ENCODE measurements at regions of chr2 and their contacts with region 1.

Region 1: GRCh38 chr2:185338104-185338503 is 400.5 kb upstream of the FSIP2 start:
- DNase-seq: no peak
- H3K4me3 ChIP-seq: no peak overlapping the region
- H3K27ac ChIP-seq: no peak overlapping the region
- H3K4me1 ChIP-seq: no peaks in the 10 kb centered on the region
- H3K27me3 ChIP-seq: no peaks in the 10 kb centered on the region
- CTCF ChIP-seq: no peak
- EP300 ChIP-seq: no peak
- POLR2A ChIP-seq: no peak
- RAD21 ChIP-seq: no peak

Region 2: DNA sequence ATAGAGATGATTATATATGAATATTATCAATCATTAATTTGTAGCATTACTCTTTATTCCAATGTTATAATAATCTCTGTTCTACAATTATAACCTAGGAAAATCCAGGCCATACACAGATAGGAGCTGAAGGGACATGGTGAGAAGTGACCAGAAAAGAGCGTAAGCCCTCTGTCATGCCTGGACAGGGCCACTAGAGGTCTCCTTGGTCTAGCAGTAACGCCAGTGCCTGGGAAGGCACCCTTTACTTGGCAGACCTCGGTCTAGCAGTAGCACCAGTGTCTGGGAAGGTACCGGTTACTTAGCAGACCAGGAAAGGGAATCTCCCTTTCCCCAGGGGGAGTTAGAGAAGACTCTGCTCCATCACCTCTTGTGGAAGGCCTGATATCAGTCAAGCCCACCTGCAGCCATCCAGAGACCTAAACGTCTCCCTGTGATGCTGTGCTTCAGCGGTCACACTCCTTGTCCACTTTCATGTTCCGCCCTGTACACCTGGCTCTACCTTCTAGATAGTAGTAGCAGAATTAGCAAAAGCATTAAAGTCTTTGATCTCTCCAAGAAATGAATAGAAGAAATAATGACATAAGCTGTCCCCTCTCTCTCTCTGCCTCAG is 47.0 kb before region 1 on chr2:
- CTCF ChIA-PET with region 1: interaction called, 16 read pairs
- POLR2A ChIA-PET with region 1: no interaction called
- DNase-seq: peak; percentile 54 to 74
- H3K4me3 ChIP-seq: no peak overlapping the region
- H3K27ac ChIP-seq: no peak overlapping the region
- H3K4me1 ChIP-seq: peaks cover 0 to 4% (median under 1%) of the 10 kb centered on the region in 4 experiments; a peak in 2 of 7 replicates
- H3K27me3 ChIP-seq: no peaks in the 10 kb centered on the region
- CTCF ChIP-seq: peak; percentile 82 to 89 (median 86)
- EP300 ChIP-seq: no peak
- POLR2A ChIP-seq: no peak
- RAD21 ChIP-seq: peak; percentile 94 to 96

Region 3: DNA sequence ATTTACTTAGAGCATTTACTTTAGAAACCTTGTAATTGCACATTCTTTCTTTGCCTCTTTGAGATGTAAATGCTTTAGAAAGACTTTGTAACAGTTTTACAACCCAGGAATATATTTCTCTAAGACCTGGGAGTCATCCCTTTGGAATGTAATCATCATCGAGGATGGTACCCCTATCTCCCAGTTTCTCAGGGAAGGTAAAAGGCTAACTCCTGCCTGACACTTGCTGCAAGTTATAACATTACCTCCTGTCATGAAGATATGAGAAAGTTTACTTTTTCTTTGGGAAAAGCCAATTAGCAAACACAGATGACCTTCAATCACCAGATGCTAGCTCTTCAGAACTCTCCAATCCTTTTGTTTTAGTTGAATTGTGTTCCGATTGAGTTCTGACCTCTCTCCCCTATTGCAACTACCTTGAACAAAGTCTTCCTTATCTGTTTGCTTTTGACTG is 19.8 kb before region 1 on chr2:
- CTCF ChIA-PET with region 1: interaction called, 21 read pairs
- POLR2A ChIA-PET with region 1: no interaction called
- DNase-seq: no peak
- H3K4me3 ChIP-seq: no peak overlapping the region
- H3K27ac ChIP-seq: no peak overlapping the region
- H3K4me1 ChIP-seq: no peaks in the 10 kb centered on the region
- H3K27me3 ChIP-seq: no peaks in the 10 kb centered on the region
- CTCF ChIP-seq: no peak
- EP300 ChIP-seq: no peak
- POLR2A ChIP-seq: no peak
- RAD21 ChIP-seq: no peak

Region 4: DNA sequence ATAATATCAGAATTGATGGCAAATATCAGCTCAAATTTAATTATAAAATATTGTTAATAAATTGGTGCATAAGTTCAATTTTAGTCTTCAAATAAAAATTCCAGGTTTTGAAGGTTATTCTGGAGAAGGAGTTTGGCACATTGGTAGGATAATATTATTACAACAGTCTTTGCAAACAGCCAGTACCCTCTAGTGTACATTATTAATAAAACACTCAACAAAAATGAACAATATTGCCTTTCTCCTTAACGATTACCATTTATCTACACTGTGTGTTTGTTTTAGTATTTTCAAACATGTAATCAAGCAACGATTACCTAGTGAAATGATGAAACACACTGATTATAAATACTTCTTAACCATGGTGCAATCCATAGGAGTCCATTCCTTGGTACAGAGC is 66.5 kb after region 1 on chr2:
- CTCF ChIA-PET with region 1: no interaction called
- POLR2A ChIA-PET with region 1: no interaction called
- DNase-seq: no peak
- H3K4me3 ChIP-seq: no peak overlapping the region
- H3K27ac ChIP-seq: no peak overlapping the region
- H3K4me1 ChIP-seq: no peaks in the 10 kb centered on the region
- H3K27me3 ChIP-seq: no peaks in the 10 kb centered on the region
- CTCF ChIP-seq: no peak
- EP300 ChIP-seq: no peak
- POLR2A ChIP-seq: no peak
- RAD21 ChIP-seq: no peak

Region 5: GRCh38 chr2:185628985-185629384 is 290.9 kb after region 1 on chr2:
- CTCF ChIA-PET with region 1: interaction called, 10 read pairs
- POLR2A ChIA-PET with region 1: no interaction called
- DNase-seq: peak; percentile 54 to 84
- H3K4me3 ChIP-seq: no peak overlapping the region
- H3K27ac ChIP-seq: no peak overlapping the region
- H3K4me1 ChIP-seq: peaks cover 0 to 3% (median 0%) of the 10 kb centered on the region in 4 experiments; a peak in 1 of 7 replicates
- H3K27me3 ChIP-seq: no peaks in the 10 kb centered on the region
- CTCF ChIP-seq: peak; percentile 19 to 67 (median 61)
- EP300 ChIP-seq: no peak
- POLR2A ChIP-seq: no peak
- RAD21 ChIP-seq: peak; percentile 45 to 59